WTC11 (cell line): ENCODE measurements at regions of chr10 and their contacts with region 1.

Region 1: DNA sequence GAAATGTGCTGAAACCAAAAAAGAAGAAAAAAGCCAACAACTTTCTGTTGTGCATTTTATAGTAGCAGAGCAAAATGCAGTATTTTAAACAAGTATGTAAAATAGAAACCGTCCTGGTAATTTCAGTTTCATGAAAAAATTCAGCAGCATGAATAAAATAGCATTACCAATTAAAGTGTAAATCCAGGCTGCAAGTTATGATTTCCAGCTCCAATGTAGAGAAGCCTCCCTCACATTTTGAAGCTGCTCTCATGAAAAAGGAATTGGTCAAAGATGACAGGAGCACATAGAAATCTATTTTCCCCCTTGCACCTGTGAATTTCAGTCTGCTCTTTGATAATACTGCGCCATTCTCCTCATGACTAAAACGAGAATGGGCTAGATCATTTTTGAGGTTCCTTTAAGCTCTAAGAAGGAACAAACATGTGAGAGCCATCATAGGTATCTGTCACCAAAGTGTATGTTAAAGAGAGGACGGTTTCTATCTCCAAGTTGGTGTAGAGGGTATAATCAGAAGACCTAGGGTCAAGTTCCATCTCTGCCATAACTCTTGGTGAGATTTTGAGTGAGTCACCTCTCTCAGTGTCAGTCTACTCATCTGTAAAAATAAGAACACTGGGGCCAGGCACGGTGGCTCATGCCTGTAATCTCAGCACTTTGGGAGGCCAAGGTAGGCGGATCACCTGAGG is 107.5 kb downstream of the MTPAP start:
- DNase-seq: no peak
- ATAC-seq: no peak
- H3K4me3 Mint-ChIP-seq: no peak overlapping the region
- H3K27ac Mint-ChIP-seq: no peak overlapping the region
- H3K4me1 Mint-ChIP-seq: no peaks in the 10 kb centered on the region
- H3K27me3 Mint-ChIP-seq: no peaks in the 10 kb centered on the region
- CTCF ChIP-seq: no peak

Region 2: DNA sequence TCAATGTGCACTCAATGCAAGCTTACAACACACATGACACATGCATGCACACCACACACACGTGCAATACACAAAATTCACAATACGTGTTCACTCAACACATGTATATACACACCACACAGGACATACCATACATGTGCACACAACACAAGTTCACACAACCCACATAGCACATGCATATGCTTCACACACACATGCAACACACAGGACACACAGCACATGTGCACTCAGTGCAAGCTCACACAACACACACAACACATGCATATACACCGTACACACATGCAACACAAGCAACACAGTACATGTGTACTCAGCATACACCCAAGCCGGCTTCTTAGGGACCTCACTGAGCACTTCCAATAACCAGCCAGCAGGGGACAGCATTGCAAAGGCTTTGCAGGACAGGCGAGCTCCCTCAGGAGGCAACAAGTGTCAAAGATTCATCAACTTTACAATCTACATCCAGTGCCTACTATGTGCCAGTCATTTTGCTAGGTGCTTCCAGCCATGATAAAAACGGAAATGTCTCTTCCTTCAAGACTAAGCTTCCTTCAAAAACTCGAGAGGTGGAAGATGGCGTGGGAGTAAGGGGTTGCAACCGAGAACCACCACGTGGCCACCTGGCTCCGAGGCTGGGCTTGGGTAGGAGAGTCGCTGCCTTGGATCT is 243.3 kb before region 1 on chr10:
- CTCF ChIA-PET with region 1: interaction called, 19 read pairs
- POLR2A ChIA-PET with region 1: no interaction called
- DNase-seq: peak; percentile 81
- ATAC-seq: peak; percentile 79
- H3K4me3 Mint-ChIP-seq: no peak overlapping the region
- H3K27ac Mint-ChIP-seq: no peak overlapping the region
- H3K4me1 Mint-ChIP-seq: peaks cover 15% of the 10 kb centered on the region
- H3K27me3 Mint-ChIP-seq: no peaks in the 10 kb centered on the region; the same call in 1 of the 2 replicates
- CTCF ChIP-seq: peak; percentile 96

Region 3: DNA sequence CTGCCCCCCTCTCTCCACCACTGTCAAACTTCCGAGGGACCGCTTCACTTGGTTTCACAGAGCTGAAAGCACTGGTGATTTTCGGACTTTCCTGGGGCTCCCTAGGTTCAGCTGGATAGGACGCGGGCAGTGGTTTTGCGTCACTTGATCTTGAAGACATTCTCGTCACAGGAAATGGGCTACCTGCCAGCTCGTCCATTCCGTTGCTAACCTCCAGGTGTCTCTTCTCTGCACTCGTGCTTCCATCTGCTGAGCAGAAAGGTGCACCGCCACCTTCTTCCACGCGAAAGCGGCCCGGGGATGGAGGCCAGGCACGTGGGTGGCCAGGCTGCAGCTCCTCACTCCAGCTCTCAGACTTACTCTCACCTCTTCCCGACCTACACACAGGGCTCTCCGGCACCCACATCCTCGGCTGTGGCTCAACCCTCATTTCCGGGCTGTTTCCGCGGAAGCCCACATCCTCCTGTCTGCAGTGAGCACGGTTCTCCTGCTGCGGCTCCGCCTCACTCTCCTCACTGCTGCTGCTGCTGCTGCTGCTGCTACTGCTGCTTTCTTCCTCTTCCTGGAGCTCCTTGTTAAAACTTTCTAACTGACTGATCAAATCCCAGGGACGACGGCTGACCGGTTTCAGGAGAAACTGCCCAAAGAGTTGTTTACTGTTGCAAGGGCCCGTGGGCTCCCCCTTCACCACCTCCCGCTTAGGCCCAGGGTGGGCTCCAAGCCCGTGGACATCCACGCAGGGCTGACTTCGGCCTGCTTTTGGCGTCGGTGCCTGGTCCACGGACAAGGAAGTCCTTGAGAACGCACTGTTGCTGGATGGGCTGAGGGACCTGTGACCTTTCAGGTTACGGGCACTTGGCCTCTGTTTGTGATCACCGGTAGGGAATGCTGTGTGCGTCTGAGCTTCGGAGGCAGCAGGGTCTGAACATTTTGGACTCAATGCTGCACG is 214.2 kb before region 1 on chr10:
- CTCF ChIA-PET with region 1: interaction called, 14 read pairs
- POLR2A ChIA-PET with region 1: no interaction called
- DNase-seq: peak; percentile 52
- ATAC-seq: peak; percentile 90
- H3K4me3 Mint-ChIP-seq: no peak overlapping the region
- H3K27ac Mint-ChIP-seq: no peak overlapping the region; the same call in 1 of the 2 replicates
- H3K4me1 Mint-ChIP-seq: peaks cover 9% of the 10 kb centered on the region
- H3K27me3 Mint-ChIP-seq: no peaks in the 10 kb centered on the region
- CTCF ChIP-seq: no peak

Region 4: DNA sequence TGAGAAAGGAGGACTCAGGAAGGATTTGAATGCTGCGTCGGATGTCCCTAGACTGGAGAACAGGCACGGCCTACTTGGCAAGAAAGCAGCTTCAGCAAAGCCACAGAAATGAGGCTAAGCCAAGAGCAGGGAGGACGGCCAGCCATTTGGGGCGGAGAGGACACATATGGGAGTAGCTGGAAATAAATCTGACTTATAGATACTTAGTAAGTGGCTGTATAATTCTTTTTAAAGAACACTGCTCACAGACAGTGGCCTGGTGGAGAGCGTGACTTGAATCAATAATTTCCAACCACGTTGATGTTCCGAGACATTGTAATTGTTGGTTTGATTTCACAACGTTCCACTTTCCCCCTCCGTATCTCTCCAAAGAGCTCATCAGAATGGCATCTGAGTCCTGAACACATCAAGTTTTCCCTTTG is 114.4 kb before region 1 on chr10:
- CTCF ChIA-PET with region 1: no interaction called
- POLR2A ChIA-PET with region 1: no interaction called
- DNase-seq: no peak
- ATAC-seq: no peak
- H3K4me3 Mint-ChIP-seq: no peak overlapping the region
- H3K27ac Mint-ChIP-seq: no peak overlapping the region
- H3K4me1 Mint-ChIP-seq: no peaks in the 10 kb centered on the region
- H3K27me3 Mint-ChIP-seq: no peaks in the 10 kb centered on the region
- CTCF ChIP-seq: no peak